ENCODE measurements at regions of chr10 and their contacts with region 1.

Region 1: DNA sequence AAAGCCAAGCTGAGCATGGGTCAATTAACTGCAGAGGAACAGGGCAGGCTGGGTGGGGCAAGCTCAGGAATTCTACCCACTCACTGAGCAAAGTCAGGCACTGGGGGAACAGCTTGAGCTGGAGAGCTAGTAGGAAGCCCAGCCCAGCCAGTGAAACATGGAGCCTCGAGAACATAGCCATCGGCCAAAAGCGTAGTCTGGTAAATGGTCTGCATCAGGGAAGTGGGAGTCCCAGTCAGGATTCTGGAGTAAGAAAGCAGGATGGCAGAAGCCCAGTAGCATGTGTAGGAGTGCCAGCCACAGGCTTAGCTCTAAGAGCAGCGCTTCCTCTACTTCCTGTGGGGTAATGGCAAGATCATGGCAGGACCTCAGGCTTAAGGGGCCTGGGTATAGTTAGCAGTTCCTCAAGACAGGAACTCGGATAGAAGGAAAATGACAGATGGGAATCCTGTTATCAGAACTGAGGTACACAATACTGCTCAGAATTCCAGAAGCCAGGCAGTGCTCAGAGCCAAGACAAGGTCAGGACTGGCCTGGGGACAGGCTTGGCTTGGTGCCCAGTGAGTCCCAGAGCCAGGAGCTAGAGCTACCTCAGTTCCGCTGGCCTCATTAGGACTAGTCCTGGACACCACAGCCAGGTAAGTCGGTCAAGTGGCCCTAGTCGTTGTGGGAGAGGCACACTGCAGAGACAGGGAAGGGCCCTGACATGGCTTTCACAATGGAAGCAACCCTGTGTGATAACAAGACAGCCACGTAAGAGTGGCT is 65.4 kb upstream of the MXI1 start:
- DNase-seq: no peak
- H3K4me3 ChIP-seq: no peak overlapping the region
- H3K27ac ChIP-seq: no peak overlapping the region
- H3K4me1 ChIP-seq: peaks cover 0 to 7% of the 10 kb centered on the region in 2 donors
- H3K27me3 ChIP-seq: no peaks in the 10 kb centered on the region
- CTCF ChIP-seq: no peak
- POLR2A ChIP-seq: no peak

Region 2: GRCh38 chr10:109914966-109915365 is 227.1 kb before region 1 on chr10:
- intact Hi-C with region 1: no loop called
- DNase-seq: no peak
- H3K4me3 ChIP-seq: no peak overlapping the region
- H3K27ac ChIP-seq: peak overlapping the region in 1 of 2 donors; percentile 54
- H3K4me1 ChIP-seq: peaks cover 0 to 3% of the 10 kb centered on the region in 2 donors
- H3K27me3 ChIP-seq: no peaks in the 10 kb centered on the region
- CTCF ChIP-seq: no peak
- POLR2A ChIP-seq: no peak

Region 3: DNA sequence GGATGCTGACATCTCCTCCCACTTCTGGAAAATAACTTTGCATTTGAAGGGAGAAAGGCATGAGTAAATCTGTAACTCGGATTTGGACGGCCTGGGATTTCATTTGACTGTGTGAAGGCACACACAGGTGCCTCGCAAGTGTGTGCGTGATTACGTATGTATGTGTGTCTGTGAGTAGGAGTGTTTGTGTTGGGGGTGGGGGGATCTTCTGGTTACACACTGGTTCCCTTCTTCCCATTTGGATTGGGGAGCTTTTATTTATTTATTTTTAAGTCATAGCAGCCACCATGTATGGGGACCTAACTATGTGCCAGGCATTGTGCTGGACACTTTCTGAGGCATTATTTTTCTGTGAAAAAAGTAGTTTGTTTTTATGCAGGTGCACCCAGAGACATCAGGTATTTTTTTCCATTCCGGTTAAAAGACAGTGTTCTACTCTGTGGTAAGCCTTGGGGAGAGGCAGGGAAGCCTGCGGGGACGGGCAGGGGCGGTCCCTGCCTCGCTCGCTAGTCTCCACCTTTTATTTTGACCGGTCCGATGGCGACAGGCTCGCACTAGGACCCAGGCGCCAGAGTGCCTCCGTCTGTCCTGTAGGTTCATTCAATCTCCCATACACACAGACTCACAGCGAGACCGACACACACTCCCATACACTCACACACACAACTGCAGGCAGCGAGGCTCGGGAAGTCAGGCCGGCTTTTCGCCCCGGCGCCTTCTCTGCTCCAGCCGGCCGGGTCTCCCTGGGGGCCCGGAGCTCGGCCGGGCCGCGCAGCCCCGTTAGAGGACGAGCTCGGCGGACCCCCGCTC is 65.1 kb after region 1 on chr10 and contains the start of gene MXI1:
- intact Hi-C with region 1: loop called (anchors 10 kb)
- DNase-seq: peak in 1 of 2 donors; percentile 68
- H3K4me3 ChIP-seq: peak within 1 kb of the TSS; percentile 66 to 89 (median 81)
- H3K27ac ChIP-seq: peak within 1 kb of the TSS; percentile 97 to 99
- H3K4me1 ChIP-seq: peaks cover 0 to 8% of the 10 kb centered on the region in 2 donors
- H3K27me3 ChIP-seq: no peaks in the 10 kb centered on the region
- CTCF ChIP-seq: no peak
- POLR2A ChIP-seq: no peak
- total RNA-seq, gene MXI1: 75.4 to 137 (median 79.5) TPM

Region 4: DNA sequence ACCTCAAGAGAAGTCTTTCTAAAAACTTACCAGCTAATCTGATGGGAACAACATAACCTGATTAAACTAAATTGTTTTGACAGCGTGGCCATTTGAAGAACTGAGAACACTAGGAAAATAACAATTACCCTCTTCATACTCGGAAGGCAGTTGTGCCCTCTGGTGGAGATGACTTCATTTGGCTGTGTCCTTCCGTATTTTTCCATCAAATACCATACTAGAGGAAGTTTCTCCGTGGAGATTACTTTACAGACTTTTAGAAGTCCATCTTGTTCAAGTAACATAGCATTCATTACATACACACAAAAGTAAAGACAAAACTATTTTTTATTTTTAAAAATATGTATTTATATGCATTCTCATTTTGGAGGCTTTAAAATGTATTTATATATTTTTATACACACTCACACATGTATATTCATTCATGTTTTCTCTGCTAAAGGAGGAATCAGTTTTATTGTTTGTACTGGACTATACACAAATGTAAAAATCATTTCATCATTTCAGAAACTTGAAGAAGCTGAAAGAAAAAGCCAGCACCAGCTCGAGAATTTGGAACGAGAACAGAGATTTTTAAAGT is 137.4 kb after region 1 on chr10:
- intact Hi-C with region 1: loop called (anchors 10 kb)
- DNase-seq: peak in 1 of 2 donors; percentile 67
- H3K4me3 ChIP-seq: peak overlapping the region in 1 of 3 donors; percentile 40
- H3K27ac ChIP-seq: peak overlapping the region; percentile 8 to 54
- H3K4me1 ChIP-seq: peaks cover 0 to 5% of the 10 kb centered on the region in 2 donors
- H3K27me3 ChIP-seq: no peaks in the 10 kb centered on the region
- CTCF ChIP-seq: peak; percentile 76 to 85 (median 82)
- POLR2A ChIP-seq: no peak

Region 5: DNA sequence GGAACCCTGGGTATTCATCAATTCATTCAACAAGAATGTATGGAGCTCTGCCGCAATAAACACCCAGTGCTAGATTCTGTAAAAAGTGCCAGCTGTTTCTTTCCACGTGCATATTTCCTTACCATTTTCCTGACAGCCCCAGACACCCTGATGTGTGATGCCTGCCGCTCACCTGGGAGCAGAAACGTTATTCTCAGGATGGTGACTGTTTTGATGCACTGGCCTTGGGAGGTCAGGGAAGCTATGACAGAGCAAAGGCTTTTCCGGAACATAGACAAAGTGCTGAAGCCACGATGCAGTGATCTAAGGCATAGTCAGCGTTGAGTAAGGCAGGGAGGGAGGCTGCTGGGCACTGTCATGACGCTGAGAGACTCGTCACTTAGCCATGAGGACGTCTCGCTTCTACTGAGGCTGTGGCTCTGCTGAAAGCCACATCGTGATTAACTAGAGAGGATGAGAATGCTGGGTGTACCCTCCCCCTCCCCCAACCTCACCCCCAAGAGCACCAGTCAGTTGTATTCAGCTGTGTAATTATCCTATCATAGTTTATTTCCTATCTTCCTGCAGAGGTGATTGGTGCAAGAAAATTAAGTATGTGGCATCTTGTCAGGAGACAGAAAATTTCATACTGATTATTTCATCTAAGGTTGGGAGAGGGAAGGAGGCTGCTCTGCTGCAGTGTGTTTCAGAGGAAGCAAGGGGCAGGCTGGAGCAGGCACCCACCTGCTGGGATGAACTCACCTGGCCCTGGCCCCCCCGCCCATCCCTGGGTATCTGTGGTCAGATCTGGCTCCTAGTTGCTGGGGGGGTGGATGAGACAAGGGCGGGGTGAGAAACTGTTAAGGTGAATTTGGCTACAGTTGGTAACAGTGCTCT is 211.4 kb after region 1 on chr10:
- intact Hi-C with region 1: no loop called
- DNase-seq: peak in 1 of 2 donors; percentile 49
- H3K4me3 ChIP-seq: no peak overlapping the region
- H3K27ac ChIP-seq: peak overlapping the region; percentile 28 to 34
- H3K4me1 ChIP-seq: no peaks in the 10 kb centered on the region
- H3K27me3 ChIP-seq: no peaks in the 10 kb centered on the region
- CTCF ChIP-seq: no peak
- POLR2A ChIP-seq: no peak

Measured in breast epithelium (tissue), 4 donors.